ENCODE measurements at regions of chr17 and their contacts with region 1.

Region 1: GRCh38 chr17:60641810-60642220 is 35.8 kb upstream of the BCAS3 start:
- DNase-seq: peak in 1 of 2 donors; percentile 78
- ATAC-seq: peak; percentile 52 to 78 (median 76)
- H3K4me3 ChIP-seq: no peak overlapping the region
- H3K27ac ChIP-seq: no peak overlapping the region
- H3K4me1 ChIP-seq: peaks cover 0 to 32% (median 10%) of the 10 kb centered on the region in 9 donors
- H3K27me3 ChIP-seq: no peaks in the 10 kb centered on the region
- CTCF ChIP-seq: peak in 7 of 9 donors; percentile 43 to 71 (median 59)

Region 2: GRCh38 chr17:60421273-60421934 is 220.4 kb before region 1 on chr17:
- intact Hi-C with region 1: loop called in 2 of 10 experiments (anchors 5 to 10 kb)
- DNase-seq: peak; percentile 56 to 76
- ATAC-seq: peak; percentile 92 to 97 (median 95)
- H3K4me3 ChIP-seq: peak overlapping the region; percentile 36 to 62 (median 54)
- H3K27ac ChIP-seq: peak overlapping the region in 5 of 10 donors; percentile 12 to 85 (median 47)
- H3K4me1 ChIP-seq: peaks cover 0 to 22% (median 13%) of the 10 kb centered on the region in 9 donors
- H3K27me3 ChIP-seq: no peaks in the 10 kb centered on the region
- CTCF ChIP-seq: peak; percentile 69 to 99 (median 94)

Region 3: GRCh38 chr17:60468371-60468770 is 173.4 kb before region 1 on chr17:
- intact Hi-C with region 1: loop called in 5 of 10 experiments (anchors 10 kb)
- DNase-seq: no peak
- ATAC-seq: no peak
- H3K4me3 ChIP-seq: no peak overlapping the region
- H3K27ac ChIP-seq: no peak overlapping the region
- H3K4me1 ChIP-seq: peaks cover 0 to 36% (median 26%) of the 10 kb centered on the region in 9 donors
- H3K27me3 ChIP-seq: no peaks in the 10 kb centered on the region
- CTCF ChIP-seq: no peak

Region 4: GRCh38 chr17:60577147-60577915 is 64.5 kb before region 1 on chr17:
- intact Hi-C with region 1: loop called (anchors 2 to 10 kb)
- DNase-seq: peak in 1 of 2 donors; percentile 43
- ATAC-seq: peak; percentile 62 to 90 (median 86)
- H3K4me3 ChIP-seq: peak overlapping the region in 8 of 10 donors; percentile 27 to 56 (median 44)
- H3K27ac ChIP-seq: peak overlapping the region; percentile 20 to 85 (median 64)
- H3K4me1 ChIP-seq: peaks cover 0 to 54% (median 18%) of the 10 kb centered on the region in 9 donors
- H3K27me3 ChIP-seq: no peaks in the 10 kb centered on the region
- CTCF ChIP-seq: peak in 7 of 9 donors; percentile 25 to 68 (median 51)

Region 5: GRCh38 chr17:60586288-60586974 is 55.4 kb before region 1 on chr17:
- intact Hi-C with region 1: loop called in 1 of 10 experiments (anchors 5 kb)
- DNase-seq: no peak
- ATAC-seq: no peak
- H3K4me3 ChIP-seq: no peak overlapping the region
- H3K27ac ChIP-seq: no peak overlapping the region
- H3K4me1 ChIP-seq: no peaks in the 10 kb centered on the region
- H3K27me3 ChIP-seq: no peaks in the 10 kb centered on the region
- CTCF ChIP-seq: peak in 6 of 9 donors; percentile 12 to 44 (median 36)

Region 6: GRCh38 chr17:60599620-60600489 is 42.0 kb before region 1 on chr17 and contains the start of gene PPM1D:
- intact Hi-C with region 1: loop called in 4 of 10 experiments (anchors 2 to 5 kb)
- DNase-seq: peak; percentile 100
- ATAC-seq: peak; percentile 97 to 99 (median 98)
- H3K4me3 ChIP-seq: peak within 1 kb of the TSS; percentile 77 to 99 (median 94)
- H3K27ac ChIP-seq: peak within 1 kb of the TSS; percentile 83 to 99 (median 97)
- H3K4me1 ChIP-seq: peaks cover 0 to 58% (median 27%) of the 10 kb centered on the region in 9 donors
- H3K27me3 ChIP-seq: no peaks in the 10 kb centered on the region
- CTCF ChIP-seq: peak in 1 of 9 donors; percentile 8
- total RNA-seq, gene PPM1D: 4.5 to 10.6 (median 7.8) TPM

Region 7: DNA sequence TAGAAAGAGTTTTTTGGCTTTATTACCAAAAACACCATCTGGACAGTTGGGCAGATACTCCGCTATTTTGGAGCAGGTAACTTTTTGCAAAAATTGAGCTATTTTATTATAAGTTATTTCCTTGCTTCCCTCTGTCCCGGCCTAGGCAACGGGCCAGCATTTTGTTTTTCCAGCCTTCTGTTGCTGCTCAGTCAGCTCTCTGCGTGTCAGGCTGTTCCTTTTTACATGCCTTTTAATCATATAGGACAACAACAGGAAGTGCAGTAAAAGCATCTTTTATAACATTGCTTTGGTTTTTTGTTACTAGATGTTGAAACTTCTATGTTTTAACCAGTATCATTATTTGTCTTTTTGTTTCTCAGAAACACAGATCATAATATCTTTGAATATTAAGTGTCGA is 11.5 kb before region 1 on chr17:
- intact Hi-C with region 1: no loop called
- DNase-seq: peak in 1 of 2 donors; percentile 27
- ATAC-seq: no peak
- H3K4me3 ChIP-seq: no peak overlapping the region
- H3K27ac ChIP-seq: peak overlapping the region in 1 of 10 donors; percentile 32
- H3K4me1 ChIP-seq: peaks cover 0 to 13% (median 0%) of the 10 kb centered on the region in 9 donors
- H3K27me3 ChIP-seq: no peaks in the 10 kb centered on the region
- CTCF ChIP-seq: no peak